Heart left ventricle (tissue), 16 donors: ENCODE measurements at regions of chr21 and their contacts with region 1.

Region 1: GRCh38 chr21:37358397-37358796 is 8.2 kb upstream of the DYRK1A start:
- DNase-seq: peak in 2 of 5 donors; percentile 30 to 58
- ATAC-seq: peak in 3 of 4 donors; percentile 46 to 77 (median 55)
- H3K4me3 ChIP-seq: no peak overlapping the region
- H3K27ac ChIP-seq: peak overlapping the region in 1 of 12 donors; percentile 25
- H3K4me1 ChIP-seq: peaks cover 0 to 14% (median 0%) of the 10 kb centered on the region in 12 donors
- H3K27me3 ChIP-seq: no peaks in the 10 kb centered on the region
- CTCF ChIP-seq: no peak
- POLR2A ChIP-seq: no peak

Region 2: GRCh38 chr21:37273911-37274690 is 84.3 kb before region 1 on chr21:
- intact Hi-C with region 1: loop called in 1 of 10 experiments (anchors 5 kb)
- DNase-seq: no peak
- ATAC-seq: no peak
- H3K4me3 ChIP-seq: no peak overlapping the region
- H3K27ac ChIP-seq: no peak overlapping the region
- H3K4me1 ChIP-seq: no peaks in the 10 kb centered on the region
- H3K27me3 ChIP-seq: no peaks in the 10 kb centered on the region
- CTCF ChIP-seq: no peak
- POLR2A ChIP-seq: no peak

Region 3: GRCh38 chr21:37300114-37300746 is 58.2 kb before region 1 on chr21:
- intact Hi-C with region 1: loop called in 1 of 10 experiments (anchors 10 kb)
- DNase-seq: no peak
- ATAC-seq: no peak
- H3K4me3 ChIP-seq: no peak overlapping the region
- H3K27ac ChIP-seq: no peak overlapping the region
- H3K4me1 ChIP-seq: peaks cover 0 to 3% (median 0%) of the 10 kb centered on the region in 12 donors
- H3K27me3 ChIP-seq: no peaks in the 10 kb centered on the region
- CTCF ChIP-seq: no peak
- POLR2A ChIP-seq: no peak